Activated T-helper 2 cell treated with anti-CD3 and anti-CD28 coated beads, Interferon-gamma antibody, Interleukin-2, Interleukin-4, amounts not matched to agents 10 μg/mL and 5 μg/mL and 100 μg/mL, durations not matched to agents 14 hours and 24 hours and 36 hours (primary cell): ENCODE measurements at regions of chr10 and their contacts with region 1.

Region 1: GRCh38 chr10:8138471-8138870 is 84.0 kb downstream of the GATA3 start:
- DNase-seq: no peak
- H3K4me3 Mint-ChIP-seq: peak overlapping the region; percentile 79
- H3K27ac Mint-ChIP-seq: peak overlapping the region; percentile 93
- H3K4me1 Mint-ChIP-seq: peaks cover 63% of the 10 kb centered on the region
- H3K27me3 Mint-ChIP-seq: no peaks in the 10 kb centered on the region

Region 2: DNA sequence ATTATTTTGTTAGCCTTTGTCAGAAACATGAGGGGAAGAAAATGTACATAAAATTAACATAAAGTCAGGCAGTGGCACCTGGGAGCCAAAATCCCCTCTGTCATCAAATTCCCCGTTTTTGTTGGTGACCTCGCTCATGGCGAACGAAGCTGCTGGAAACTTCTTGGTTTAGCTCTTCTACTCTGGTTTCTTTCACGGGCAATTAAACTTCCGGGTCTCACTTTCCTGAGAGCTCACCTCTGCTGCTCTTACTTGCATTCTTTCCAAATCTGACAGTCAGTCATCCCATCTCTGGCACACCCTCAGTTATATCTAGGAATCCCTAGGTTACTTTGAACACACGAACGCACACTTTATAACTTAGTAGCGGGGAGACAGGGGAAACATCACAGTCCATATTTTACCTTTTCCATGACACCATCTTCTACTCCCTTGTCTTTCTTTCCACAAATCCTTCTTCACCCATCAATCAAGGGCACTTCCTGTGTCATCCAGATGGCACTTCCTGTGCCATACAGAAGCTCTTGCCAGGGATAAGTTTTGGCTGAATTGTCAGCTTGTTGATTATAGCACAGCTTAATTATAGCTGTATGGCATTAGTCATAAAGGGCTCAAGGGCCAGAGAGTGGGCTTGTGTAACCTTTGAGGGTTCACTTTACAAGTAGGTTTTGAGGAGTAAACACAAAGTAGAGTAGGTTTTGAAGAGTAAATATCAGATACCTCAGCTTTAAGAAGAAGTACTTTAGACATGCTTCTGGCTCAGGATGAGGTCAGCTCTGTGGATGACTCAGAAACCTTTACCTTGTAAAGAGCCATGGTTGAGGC is 21.1 kb after region 1 on chr10:
- intact Hi-C with region 1: loop called (anchors 2 kb)
- DNase-seq: no peak
- H3K4me3 Mint-ChIP-seq: peak overlapping the region; percentile 15
- H3K27ac Mint-ChIP-seq: peak overlapping the region; percentile 74
- H3K4me1 Mint-ChIP-seq: peaks cover 21% of the 10 kb centered on the region
- H3K27me3 Mint-ChIP-seq: no peaks in the 10 kb centered on the region

Region 3: GRCh38 chr10:8315619-8316021 is 177.1 kb after region 1 on chr10:
- intact Hi-C with region 1: loop called (anchors 2 kb)
- DNase-seq: no peak
- H3K4me3 Mint-ChIP-seq: no peak overlapping the region
- H3K27ac Mint-ChIP-seq: peak overlapping the region; percentile 70
- H3K4me1 Mint-ChIP-seq: peaks cover 64% of the 10 kb centered on the region
- H3K27me3 Mint-ChIP-seq: no peaks in the 10 kb centered on the region

Region 4: DNA sequence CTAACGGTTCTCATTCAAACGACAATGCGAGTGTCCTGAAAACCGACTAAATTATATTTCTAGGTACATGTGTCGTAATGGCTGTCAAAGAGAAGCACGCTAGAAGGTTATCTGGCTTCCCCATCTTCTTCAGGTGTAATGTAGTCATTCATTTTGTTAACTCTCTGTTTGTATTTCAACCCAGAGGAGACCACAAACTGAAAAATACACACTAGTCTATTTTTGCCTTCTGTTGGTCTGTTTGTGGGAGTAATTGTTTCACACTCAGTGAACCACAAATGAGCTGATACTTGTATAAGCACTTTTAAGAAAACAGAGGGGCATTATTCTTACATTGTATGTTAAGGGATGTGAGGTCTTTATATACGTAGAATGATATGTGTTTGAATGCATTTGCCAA is 221.9 kb after region 1 on chr10:
- intact Hi-C with region 1: loop called (anchors 1 kb)
- DNase-seq: peak; percentile 37
- H3K4me3 Mint-ChIP-seq: peak overlapping the region; percentile 70
- H3K27ac Mint-ChIP-seq: peak overlapping the region; percentile 88
- H3K4me1 Mint-ChIP-seq: peaks cover 79% of the 10 kb centered on the region
- H3K27me3 Mint-ChIP-seq: no peaks in the 10 kb centered on the region

Region 5: DNA sequence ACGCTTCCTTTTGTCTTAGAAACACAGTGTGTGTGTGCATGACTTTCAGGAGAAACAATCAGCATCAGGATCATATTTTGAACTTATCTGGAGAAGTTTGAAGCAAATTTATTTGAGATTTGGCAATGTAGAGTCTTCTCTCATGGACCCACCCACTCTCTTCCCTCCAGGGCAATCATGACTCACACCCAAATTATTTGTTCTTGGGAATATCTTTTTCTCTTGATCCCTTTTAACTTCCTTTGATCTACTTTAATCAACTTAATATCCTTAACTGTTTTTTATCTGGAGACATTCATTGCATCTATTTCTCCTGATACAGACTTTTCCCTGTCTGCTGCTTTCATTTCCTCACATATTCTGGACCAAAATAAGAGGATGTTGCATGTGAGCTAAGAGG is 1090.3 kb after region 1 on chr10:
- intact Hi-C with region 1: loop called (anchors 1 kb)
- DNase-seq: no peak
- H3K4me3 Mint-ChIP-seq: no peak overlapping the region
- H3K27ac Mint-ChIP-seq: no peak overlapping the region
- H3K4me1 Mint-ChIP-seq: peaks cover 41% of the 10 kb centered on the region
- H3K27me3 Mint-ChIP-seq: peaks cover 7% of the 10 kb centered on the region